ENCODE measurements at regions of chr6 and their contacts with region 1.

Region 1: DNA sequence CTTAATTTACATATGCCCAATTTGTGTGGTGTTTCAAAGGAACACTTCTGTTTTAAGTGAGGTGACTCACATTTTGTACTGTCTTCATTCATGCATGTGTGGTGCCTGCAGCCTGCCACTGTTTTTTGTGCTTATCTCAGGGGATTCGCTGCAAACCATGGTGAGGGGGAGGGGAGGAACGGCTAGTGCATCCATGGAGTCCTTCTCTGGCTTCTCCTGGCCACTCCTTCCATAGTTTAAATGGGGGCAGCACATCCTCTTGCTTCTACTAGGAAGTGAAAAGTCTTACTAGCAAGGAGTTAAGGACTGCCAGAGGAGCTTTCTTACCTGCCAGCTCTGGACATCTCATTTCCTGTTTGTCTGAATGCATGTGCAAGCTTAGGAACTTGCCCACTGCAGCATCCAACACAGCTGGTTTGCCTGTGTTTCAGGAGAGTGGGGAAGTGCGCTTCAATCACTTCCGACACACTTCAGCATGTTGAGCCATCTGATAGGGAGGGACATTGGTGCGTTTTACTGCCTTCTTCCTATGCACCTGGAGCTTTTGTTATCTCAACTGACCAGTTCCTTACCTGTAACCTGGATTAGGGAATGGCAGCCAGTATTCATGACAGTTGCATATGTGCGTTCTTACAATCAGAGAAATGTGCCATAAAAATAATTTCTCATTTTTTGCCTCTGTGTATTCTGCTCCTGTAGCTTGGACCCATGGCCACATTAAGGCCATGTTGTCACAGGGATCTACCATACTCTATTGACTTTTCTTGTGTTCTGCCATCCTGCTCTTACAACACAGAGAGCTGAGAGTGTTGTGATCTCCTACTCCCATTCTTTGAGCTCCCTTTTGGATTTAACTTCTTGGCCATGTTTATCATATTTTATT is 211.3 kb downstream of the ARID1B start:
- DNase-seq: no peak
- H3K4me3 ChIP-seq: peak overlapping the region in 1 of 4 experiments; percentile 2; a peak in 1 of 8 replicates
- H3K27ac ChIP-seq: peak overlapping the region; percentile 48; the same call in 1 of the 2 replicates
- H3K4me1 ChIP-seq: peaks cover 8 to 26% (median 17%) of the 10 kb centered on the region in 4 experiments; a peak in 5 of 7 replicates
- H3K27me3 ChIP-seq: no peaks in the 10 kb centered on the region
- CTCF ChIP-seq: no peak
- EP300 ChIP-seq: no peak
- POLR2A ChIP-seq: no peak
- RAD21 ChIP-seq: no peak

Region 2: DNA sequence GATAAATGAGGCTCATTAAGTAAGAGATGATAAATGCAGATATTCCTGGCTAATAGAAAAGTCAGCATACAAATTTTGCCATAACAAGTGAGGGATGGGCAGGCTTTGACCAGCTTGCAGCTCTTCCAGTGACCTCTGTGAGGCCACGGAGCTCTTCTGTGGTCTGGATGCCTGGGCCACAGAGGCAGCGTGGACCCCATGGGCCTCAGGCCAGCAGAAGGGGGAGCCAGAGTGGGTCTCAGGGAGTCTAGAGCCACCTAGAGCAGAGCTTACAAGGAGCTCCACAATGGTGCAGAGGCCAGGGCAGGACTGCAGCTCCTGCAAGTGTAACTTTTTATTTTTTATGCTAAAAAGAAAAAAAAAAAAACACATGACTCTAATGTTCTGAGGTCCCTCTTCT is 46.3 kb before region 1 on chr6:
- CTCF ChIA-PET with region 1: interaction called, 10 read pairs
- POLR2A ChIA-PET with region 1: no interaction called
- DNase-seq: peak in 1 of 2 experiments; percentile 21
- H3K4me3 ChIP-seq: no peak overlapping the region
- H3K27ac ChIP-seq: no peak overlapping the region
- H3K4me1 ChIP-seq: peaks cover 2 to 15% (median 10%) of the 10 kb centered on the region in 4 experiments; a peak in 5 of 7 replicates
- H3K27me3 ChIP-seq: no peaks in the 10 kb centered on the region
- CTCF ChIP-seq: peak; percentile 63 to 77 (median 65)
- EP300 ChIP-seq: no peak
- POLR2A ChIP-seq: no peak
- RAD21 ChIP-seq: peak; percentile 44 to 61

Region 3: DNA sequence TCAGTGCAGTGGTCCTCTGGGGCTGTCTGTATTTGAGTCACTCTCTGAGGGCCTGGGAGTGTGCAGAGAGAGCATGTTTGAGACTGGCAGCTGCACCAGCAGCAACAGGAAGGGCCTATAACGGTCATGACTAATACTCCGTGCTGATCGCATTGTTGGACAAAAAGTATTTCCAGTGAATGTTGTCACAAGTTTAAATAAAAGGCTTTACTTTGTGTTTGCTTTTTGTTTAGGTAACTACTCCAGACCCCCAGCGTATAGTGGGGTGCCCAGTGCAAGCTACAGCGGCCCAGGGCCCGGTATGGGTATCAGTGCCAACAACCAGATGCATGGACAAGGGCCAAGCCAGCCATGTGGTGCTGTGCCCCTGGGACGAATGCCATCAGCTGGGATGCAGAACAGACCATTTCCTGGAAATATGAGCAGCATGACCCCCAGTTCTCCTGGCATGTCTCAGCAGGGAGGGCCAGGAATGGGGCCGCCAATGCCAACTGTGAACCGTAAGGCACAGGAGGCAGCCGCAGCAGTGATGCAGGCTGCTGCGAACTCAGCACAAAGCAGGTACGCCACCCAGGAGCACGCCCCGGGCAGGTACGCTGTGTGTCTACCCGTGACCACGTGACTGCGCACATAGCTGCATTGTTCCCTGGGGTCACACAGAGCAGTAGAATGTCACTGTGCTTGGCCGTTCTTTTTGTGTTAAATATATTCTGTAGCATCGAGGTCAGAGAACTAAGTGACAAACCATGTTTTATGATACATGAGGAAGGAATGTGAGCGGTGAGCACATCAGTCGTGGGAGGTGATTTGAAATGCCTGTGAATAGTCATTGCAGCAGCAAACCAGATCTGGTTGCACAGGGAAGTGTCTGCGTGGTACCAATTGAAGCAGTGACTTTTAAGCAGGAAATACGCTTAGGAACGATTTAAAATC is 160.1 kb after region 1 on chr6:
- CTCF ChIA-PET with region 1: no interaction called
- POLR2A ChIA-PET with region 1: no interaction called
- DNase-seq: no peak
- H3K4me3 ChIP-seq: no peak overlapping the region
- H3K27ac ChIP-seq: no peak overlapping the region
- H3K4me1 ChIP-seq: peaks cover 5 to 17% (median 13%) of the 10 kb centered on the region in 4 experiments
- H3K27me3 ChIP-seq: no peaks in the 10 kb centered on the region
- CTCF ChIP-seq: no peak
- EP300 ChIP-seq: no peak
- POLR2A ChIP-seq: no peak
- RAD21 ChIP-seq: no peak